ENCODE measurements at regions of chr11 and their contacts with region 1.

Region 1: DNA sequence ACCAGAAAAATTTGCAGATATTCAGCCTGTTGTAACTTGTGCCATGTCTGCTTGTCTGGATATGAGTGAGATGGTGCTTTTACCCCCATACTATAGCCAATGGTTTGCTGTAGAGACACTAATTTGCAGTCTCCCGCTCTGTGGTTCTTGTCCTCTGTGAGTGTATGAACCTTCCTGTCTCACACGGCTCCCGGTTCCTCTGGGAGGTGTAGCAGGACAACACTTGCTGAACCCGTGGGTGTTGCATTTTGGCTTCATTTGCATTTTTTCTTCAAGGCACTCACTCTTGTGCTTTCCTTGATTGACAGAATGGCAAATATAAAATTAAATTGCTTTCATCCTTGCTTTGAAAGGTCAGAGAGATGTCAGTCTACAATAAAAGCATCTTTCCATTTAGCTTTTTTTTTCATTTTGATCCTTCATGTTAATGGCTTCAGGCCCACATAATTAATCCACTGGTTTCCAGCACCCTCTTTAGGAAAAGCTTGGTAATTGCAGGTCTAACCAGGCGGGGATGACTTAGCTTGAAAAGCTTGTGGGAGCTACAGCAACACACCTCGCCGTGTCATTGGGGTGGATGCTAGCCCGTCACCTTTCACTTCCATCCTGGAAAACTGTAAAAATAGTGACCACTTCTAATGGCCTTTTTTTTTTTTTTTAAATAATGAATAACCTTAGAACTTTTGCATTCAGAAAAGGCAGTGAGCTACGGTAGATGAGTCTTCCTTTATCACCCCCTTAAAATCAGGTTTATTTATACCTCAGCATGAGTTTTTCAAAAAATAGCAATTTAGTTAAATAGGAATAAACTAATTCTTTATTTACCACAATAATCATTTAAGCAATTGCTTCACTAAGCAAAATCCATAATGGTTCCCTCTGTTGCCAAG is 27.4 kb upstream of the ST14 start:
- DNase-seq: peak; percentile 63 to 73 (median 68)
- H3K4me3 ChIP-seq: no peak overlapping the region
- H3K4me3 Mint-ChIP-seq: no peak overlapping the region
- H3K27ac ChIP-seq: no peak overlapping the region
- H3K27ac Mint-ChIP-seq: peak overlapping the region in 2 of 7 donors; percentile 37 to 39
- H3K4me1 ChIP-seq: no peaks in the 10 kb centered on the region
- H3K4me1 Mint-ChIP-seq: peaks cover 0 to 2% (median 0%) of the 10 kb centered on the region in 4 donors
- H3K27me3 ChIP-seq: no peaks in the 10 kb centered on the region
- H3K27me3 Mint-ChIP-seq: no peaks in the 10 kb centered on the region

Region 2: GRCh38 chr11:129785383-129786111 is 346.7 kb before region 1 on chr11:
- CTCF ChIA-PET with region 1: interaction called, 64 read pairs
- POLR2A ChIA-PET with region 1: interaction called, 3 read pairs
- intact Hi-C with region 1: loop called (anchors 1 kb)
- DNase-seq: peak in 4 of 5 donors; percentile 12 to 33 (median 25)
- H3K4me3 ChIP-seq: no peak overlapping the region
- H3K4me3 Mint-ChIP-seq: no peak overlapping the region
- H3K27ac ChIP-seq: no peak overlapping the region
- H3K27ac Mint-ChIP-seq: peak overlapping the region in 3 of 7 donors; percentile 8 to 51 (median 47)
- H3K4me1 ChIP-seq: peaks cover 10% of the 10 kb centered on the region
- H3K4me1 Mint-ChIP-seq: peaks cover 7 to 10% (median 9%) of the 10 kb centered on the region in 4 donors
- H3K27me3 ChIP-seq: no peaks in the 10 kb centered on the region
- H3K27me3 Mint-ChIP-seq: no peaks in the 10 kb centered on the region

Region 3: GRCh38 chr11:129895126-129896041 is 236.8 kb before region 1 on chr11 and contains the start of gene NFRKB:
- CTCF ChIA-PET with region 1: interaction called, 13 read pairs
- POLR2A ChIA-PET with region 1: interaction called, 8 read pairs
- intact Hi-C with region 1: no loop called
- DNase-seq: peak; percentile 81 to 89 (median 84)
- H3K4me3 ChIP-seq: peak within 1 kb of the TSS; percentile 61 to 84
- H3K4me3 Mint-ChIP-seq: peak within 1 kb of the TSS; percentile 92 to 94 (median 94)
- H3K27ac ChIP-seq: peak within 1 kb of the TSS; percentile 81
- H3K27ac Mint-ChIP-seq: peak within 1 kb of the TSS; percentile 82 to 93 (median 90)
- H3K4me1 ChIP-seq: peaks cover 29% of the 10 kb centered on the region
- H3K4me1 Mint-ChIP-seq: peaks cover 20 to 51% (median 33%) of the 10 kb centered on the region in 4 donors
- H3K27me3 ChIP-seq: no peaks in the 10 kb centered on the region
- H3K27me3 Mint-ChIP-seq: no peaks in the 10 kb centered on the region
- total RNA-seq, gene NFRKB: 91.9 to 94.9 TPM

Region 4: GRCh38 chr11:129930296-129930695 is 201.9 kb before region 1 on chr11:
- CTCF ChIA-PET with region 1: interaction called, 120 read pairs
- POLR2A ChIA-PET with region 1: no interaction called
- intact Hi-C with region 1: no loop called
- DNase-seq: no peak
- H3K4me3 ChIP-seq: no peak overlapping the region
- H3K4me3 Mint-ChIP-seq: no peak overlapping the region
- H3K27ac ChIP-seq: no peak overlapping the region
- H3K27ac Mint-ChIP-seq: no peak overlapping the region
- H3K4me1 ChIP-seq: no peaks in the 10 kb centered on the region
- H3K4me1 Mint-ChIP-seq: peaks cover 0 to 4% (median 0%) of the 10 kb centered on the region in 4 donors
- H3K27me3 ChIP-seq: no peaks in the 10 kb centered on the region
- H3K27me3 Mint-ChIP-seq: no peaks in the 10 kb centered on the region

Region 5: GRCh38 chr11:130002846-130003716 is 129.1 kb before region 1 on chr11:
- CTCF ChIA-PET with region 1: interaction called, 17 read pairs
- POLR2A ChIA-PET with region 1: interaction called, 9 read pairs
- intact Hi-C with region 1: no loop called
- DNase-seq: peak; percentile 95 to 96 (median 96)
- H3K4me3 ChIP-seq: peak overlapping the region; percentile 80 to 91
- H3K4me3 Mint-ChIP-seq: peak overlapping the region; percentile 99 to 100 (median 100)
- H3K27ac ChIP-seq: peak overlapping the region; percentile 96
- H3K27ac Mint-ChIP-seq: peak overlapping the region; percentile 98 to 100 (median 100)
- H3K4me1 ChIP-seq: peaks cover 35% of the 10 kb centered on the region
- H3K4me1 Mint-ChIP-seq: peaks cover 20 to 51% (median 35%) of the 10 kb centered on the region in 4 donors
- H3K27me3 ChIP-seq: no peaks in the 10 kb centered on the region
- H3K27me3 Mint-ChIP-seq: no peaks in the 10 kb centered on the region

Region 6: DNA sequence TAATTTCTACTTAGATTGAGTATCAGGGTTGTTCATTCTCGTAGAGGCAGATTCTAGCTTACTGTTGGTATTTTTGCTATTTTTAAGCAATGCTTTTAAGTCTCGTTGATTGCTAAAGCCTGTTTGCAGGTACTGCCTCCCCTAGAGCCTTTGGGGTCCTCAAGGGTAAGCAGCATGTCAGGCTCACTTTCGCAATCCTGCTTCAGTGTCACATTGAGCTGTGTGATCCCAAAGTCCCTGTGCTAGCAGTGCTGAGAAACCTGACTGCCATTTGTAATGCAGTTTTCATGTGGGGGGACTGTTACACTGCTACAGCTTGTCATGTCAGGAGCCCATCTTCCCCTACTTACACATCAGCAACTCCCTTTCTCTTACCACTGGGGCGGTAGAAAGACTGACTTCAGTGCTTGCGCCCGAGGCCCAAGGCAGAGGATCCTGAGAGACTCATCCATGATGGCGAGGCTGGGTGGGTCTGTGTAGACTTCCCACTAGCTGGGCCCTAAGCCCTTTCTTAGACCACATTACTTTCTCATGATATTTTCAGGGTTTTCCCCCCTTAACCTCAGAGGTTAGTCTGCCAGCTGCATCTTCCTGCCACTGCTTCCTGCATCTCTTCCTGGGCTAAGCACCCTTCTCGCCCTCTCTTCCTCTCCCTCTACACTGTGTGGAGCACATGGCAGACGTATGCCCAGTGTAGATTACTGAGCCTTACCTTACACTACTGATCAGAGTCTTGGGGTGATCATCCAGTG is 13.4 kb before region 1 on chr11:
- CTCF ChIA-PET with region 1: interaction called, 26 read pairs
- POLR2A ChIA-PET with region 1: interaction called, 6 read pairs
- intact Hi-C with region 1: no loop called
- DNase-seq: peak; percentile 21 to 52 (median 35)
- H3K4me3 ChIP-seq: no peak overlapping the region
- H3K4me3 Mint-ChIP-seq: peak overlapping the region in 7 of 8 donors; percentile 1 to 66 (median 44)
- H3K27ac ChIP-seq: no peak overlapping the region
- H3K27ac Mint-ChIP-seq: peak overlapping the region in 1 of 7 donors; percentile 15
- H3K4me1 ChIP-seq: peaks cover 40% of the 10 kb centered on the region
- H3K4me1 Mint-ChIP-seq: peaks cover 31 to 45% (median 39%) of the 10 kb centered on the region in 4 donors
- H3K27me3 ChIP-seq: no peaks in the 10 kb centered on the region
- H3K27me3 Mint-ChIP-seq: no peaks in the 10 kb centered on the region

Region 7: DNA sequence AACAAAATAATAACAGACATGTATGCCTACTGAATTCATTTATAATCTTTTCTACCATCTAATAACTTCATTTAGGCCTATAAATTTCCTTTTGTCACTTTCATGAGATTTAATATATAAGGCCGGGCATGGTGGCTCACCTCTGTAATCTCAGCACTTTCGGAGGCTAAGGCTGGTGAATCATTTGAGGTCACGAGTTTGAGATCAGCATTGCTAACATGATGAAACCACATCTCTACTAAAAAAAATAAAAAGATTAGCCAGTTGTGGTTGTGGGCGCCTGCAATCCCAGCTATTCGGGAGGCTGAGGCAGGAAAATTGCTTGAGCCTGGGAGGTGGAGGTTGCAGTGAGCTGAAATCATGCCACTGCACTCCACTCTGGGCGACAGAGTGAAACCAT is 1224.0 kb after region 1 on chr11:
- CTCF ChIA-PET with region 1: no interaction called
- POLR2A ChIA-PET with region 1: no interaction called
- intact Hi-C with region 1: no loop called
- DNase-seq: no peak
- H3K4me3 ChIP-seq: no peak overlapping the region
- H3K4me3 Mint-ChIP-seq: no peak overlapping the region
- H3K27ac ChIP-seq: no peak overlapping the region
- H3K27ac Mint-ChIP-seq: no peak overlapping the region
- H3K4me1 ChIP-seq: no peaks in the 10 kb centered on the region
- H3K4me1 Mint-ChIP-seq: no peaks in the 10 kb centered on the region
- H3K27me3 ChIP-seq: no peaks in the 10 kb centered on the region
- H3K27me3 Mint-ChIP-seq: no peaks in the 10 kb centered on the region